ENCODE measurements at regions of chr3 and their contacts with region 1.

Region 1: DNA sequence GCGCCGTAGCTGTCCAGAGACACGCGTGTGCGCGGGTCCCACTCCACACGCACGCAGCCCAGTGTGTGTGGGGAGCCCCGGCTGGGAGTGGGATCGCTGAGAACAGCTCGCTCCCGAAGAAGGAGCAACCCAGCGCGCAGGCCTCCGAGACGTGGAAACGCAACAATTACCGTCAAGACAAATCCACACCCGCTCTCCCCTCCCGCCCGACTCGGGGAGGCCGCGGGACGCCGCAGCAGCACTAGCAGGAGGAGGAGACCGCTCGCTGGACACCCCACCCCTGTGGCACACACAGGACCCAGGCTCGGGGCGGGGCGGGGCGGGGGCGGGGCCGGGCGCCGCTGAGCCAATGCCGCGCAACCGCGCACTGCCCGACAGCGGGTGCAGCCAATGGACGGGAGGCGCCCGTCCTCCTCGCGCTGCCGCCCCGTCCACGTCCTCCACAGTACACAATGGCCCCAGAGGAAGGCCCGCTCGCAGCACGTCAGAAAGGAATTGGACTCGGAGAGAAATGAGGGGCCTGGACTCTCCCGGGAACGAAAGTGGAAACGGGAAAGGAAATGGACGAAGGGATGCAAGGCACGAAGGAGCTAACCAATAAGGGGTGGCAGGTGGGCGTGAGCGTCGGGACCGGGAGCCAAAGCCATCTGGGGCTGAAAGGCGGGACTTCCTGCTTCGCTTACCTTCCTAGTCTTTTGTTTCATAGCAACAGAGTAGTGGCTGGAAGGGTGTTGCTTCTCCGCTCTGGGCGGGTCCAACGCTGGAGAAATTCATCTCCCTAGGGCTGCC is at the start of gene CBLB:
- DNase-seq: peak; percentile 92
- H3K4me3 ChIP-seq: peak within 1 kb of the TSS; percentile 94
- H3K27ac ChIP-seq: peak within 1 kb of the TSS; percentile 98
- H3K4me1 ChIP-seq: no peaks in the 10 kb centered on the region
- H3K27me3 ChIP-seq: no peaks in the 10 kb centered on the region
- CTCF ChIP-seq: no peak
- total RNA-seq, gene CBLB: 20.2 to 34.5 TPM

Region 2: DNA sequence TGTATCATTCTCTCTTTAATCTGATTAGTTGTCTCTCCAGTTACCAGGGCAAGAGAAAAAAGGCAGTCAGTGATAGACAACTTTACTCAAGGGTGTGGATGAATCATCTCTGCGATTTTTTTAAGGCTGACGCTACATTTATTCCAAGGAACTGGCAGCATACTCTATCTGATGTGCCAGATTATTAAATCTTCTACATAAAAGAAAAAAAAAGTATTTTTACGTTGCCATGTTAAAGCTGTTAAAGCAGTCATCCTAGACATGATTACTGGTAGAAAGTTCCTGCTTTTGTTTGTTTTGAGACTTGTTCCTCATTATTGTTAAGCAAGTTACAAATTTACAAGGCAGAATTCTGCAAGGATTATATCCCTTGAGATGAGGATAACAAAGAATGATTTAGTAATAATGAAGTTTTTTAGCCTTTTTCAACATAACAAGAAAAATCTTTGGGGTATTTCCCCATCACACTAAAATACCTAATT is 121.8 kb before region 1 on chr3:
- intact Hi-C with region 1: loop called (anchors 10 kb)
- DNase-seq: no peak
- H3K4me3 ChIP-seq: no peak overlapping the region
- H3K27ac ChIP-seq: peak overlapping the region; percentile 50
- H3K4me1 ChIP-seq: no peaks in the 10 kb centered on the region
- H3K27me3 ChIP-seq: no peaks in the 10 kb centered on the region
- CTCF ChIP-seq: no peak

Region 3: DNA sequence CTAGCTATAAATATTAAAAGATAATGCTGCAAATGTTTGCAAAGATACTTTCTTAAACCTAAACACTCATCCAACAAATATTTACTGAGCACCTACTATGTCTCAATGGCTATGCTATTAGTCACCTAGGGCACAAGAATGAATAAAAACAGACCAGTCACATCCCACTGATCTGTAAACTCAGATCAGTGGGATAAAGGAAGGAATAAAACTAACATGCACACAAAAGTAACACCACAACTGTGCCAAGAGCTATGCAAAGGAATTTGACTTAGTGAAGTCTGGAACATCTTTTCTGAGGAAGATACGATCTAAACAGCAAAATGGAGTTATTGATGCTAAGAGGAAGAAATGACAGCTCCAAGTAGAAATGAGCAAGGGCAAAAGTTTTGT is 56.7 kb before region 1 on chr3:
- intact Hi-C with region 1: no loop called
- DNase-seq: no peak
- H3K4me3 ChIP-seq: no peak overlapping the region
- H3K27ac ChIP-seq: no peak overlapping the region
- H3K4me1 ChIP-seq: peaks cover 3% of the 10 kb centered on the region
- H3K27me3 ChIP-seq: no peaks in the 10 kb centered on the region
- CTCF ChIP-seq: no peak